GM12878 (cell line): ENCODE measurements at regions of chr2 and their contacts with region 1.

Region 1: DNA sequence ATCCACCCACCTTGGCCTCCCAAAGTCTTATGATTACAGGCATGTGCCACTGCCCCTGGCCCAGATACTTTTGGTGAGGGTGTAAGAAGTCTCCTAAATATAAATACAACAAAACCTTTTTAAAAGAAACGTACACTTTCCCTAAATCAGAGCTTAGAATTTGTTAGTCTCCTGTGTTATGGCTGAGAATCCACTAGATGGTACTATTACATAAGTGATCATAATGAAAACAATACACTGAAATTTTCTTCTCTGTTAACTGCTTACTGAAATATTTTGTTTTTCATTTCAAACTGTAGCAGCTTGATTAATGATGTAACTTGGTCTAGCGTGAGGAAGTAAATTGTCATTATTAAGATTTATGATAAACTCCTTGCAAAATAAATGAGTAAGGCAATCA is 74.8 kb upstream of the FAM98A start:
- DNase-seq: no peak
- ATAC-seq: peak; percentile 51
- H3K4me3 ChIP-seq: no peak overlapping the region
- H3K27ac ChIP-seq: no peak overlapping the region
- H3K4me1 ChIP-seq: no peaks in the 10 kb centered on the region
- H3K27me3 ChIP-seq: no peaks in the 10 kb centered on the region; a peak in 1 of 4 replicates
- CTCF ChIP-seq: peak in 2 of 3 experiments; percentile 18 to 44; a peak in 4 of 6 replicates
- EP300 ChIP-seq: no peak
- POLR2A ChIP-seq: no peak
- RAD21 ChIP-seq: peak; percentile 57; the same call in 1 of the 2 replicates

Region 2: GRCh38 chr2:33457556-33458247 is 216.2 kb before region 1 on chr2:
- CTCF ChIA-PET with region 1: no interaction called
- POLR2A ChIA-PET with region 1: no interaction called
- RAD21 ChIA-PET with region 1: no interaction called
- SMC1A ChIA-PET with region 1: no interaction called
- in situ Hi-C with region 1: no loop called
- intact Hi-C with region 1: no loop called
- DNase-seq: no peak
- ATAC-seq: peak; percentile 82
- H3K4me3 ChIP-seq: no peak overlapping the region
- H3K27ac ChIP-seq: no peak overlapping the region
- H3K4me1 ChIP-seq: no peaks in the 10 kb centered on the region
- H3K27me3 ChIP-seq: no peaks in the 10 kb centered on the region
- CTCF ChIP-seq: no peak
- EP300 ChIP-seq: no peak
- POLR2A ChIP-seq: no peak
- RAD21 ChIP-seq: no peak

Region 3: GRCh38 chr2:33583194-33583938 is 90.6 kb before region 1 on chr2:
- CTCF ChIA-PET with region 1: no interaction called
- POLR2A ChIA-PET with region 1: no interaction called
- RAD21 ChIA-PET with region 1: no interaction called
- SMC1A ChIA-PET with region 1: no interaction called
- in situ Hi-C with region 1: no loop called
- intact Hi-C with region 1: no loop called
- DNase-seq: peak; percentile 26
- ATAC-seq: peak; percentile 73
- H3K4me3 ChIP-seq: no peak overlapping the region
- H3K27ac ChIP-seq: 0 out of 2 replicates have a peak overlapping the region, but pooled peaks have one; percentile 6
- H3K4me1 ChIP-seq: peaks cover 3% of the 10 kb centered on the region; the same call in 1 of the 2 replicates
- H3K27me3 ChIP-seq: no peaks in the 10 kb centered on the region
- CTCF ChIP-seq: peak; percentile 72 to 85 (median 83)
- EP300 ChIP-seq: no peak
- POLR2A ChIP-seq: no peak
- RAD21 ChIP-seq: peak; percentile 96

Region 4: GRCh38 chr2:34570266-34570872 is 896.4 kb after region 1 on chr2:
- CTCF ChIA-PET with region 1: interaction called, 4 read pairs
- POLR2A ChIA-PET with region 1: no interaction called
- RAD21 ChIA-PET with region 1: no interaction called
- SMC1A ChIA-PET with region 1: no interaction called
- in situ Hi-C with region 1: no loop called
- intact Hi-C with region 1: loop called (anchors 10 kb)
- DNase-seq: no peak
- ATAC-seq: peak; percentile 96
- H3K4me3 ChIP-seq: no peak overlapping the region
- H3K27ac ChIP-seq: no peak overlapping the region
- H3K4me1 ChIP-seq: no peaks in the 10 kb centered on the region
- H3K27me3 ChIP-seq: no peaks in the 10 kb centered on the region
- CTCF ChIP-seq: peak in 2 of 3 experiments; percentile 45 to 61; a peak in 3 of 6 replicates
- EP300 ChIP-seq: no peak
- POLR2A ChIP-seq: no peak
- RAD21 ChIP-seq: peak; percentile 35

Region 5: GRCh38 chr2:35343135-35343534 is 1669.2 kb after region 1 on chr2:
- CTCF ChIA-PET with region 1: no interaction called
- POLR2A ChIA-PET with region 1: no interaction called
- RAD21 ChIA-PET with region 1: no interaction called
- SMC1A ChIA-PET with region 1: no interaction called
- in situ Hi-C with region 1: no loop called
- intact Hi-C with region 1: loop called (anchors 10 kb)
- DNase-seq: no peak
- ATAC-seq: peak; percentile 61; the same call in 2 of the 3 replicates
- H3K4me3 ChIP-seq: no peak overlapping the region
- H3K27ac ChIP-seq: no peak overlapping the region
- H3K4me1 ChIP-seq: no peaks in the 10 kb centered on the region
- H3K27me3 ChIP-seq: no peaks in the 10 kb centered on the region
- CTCF ChIP-seq: peak; percentile 44 to 57 (median 46)
- EP300 ChIP-seq: no peak
- POLR2A ChIP-seq: no peak
- RAD21 ChIP-seq: peak; percentile 37